Activated T-helper 2 cell treated with anti-CD3 and anti-CD28 coated beads, Interferon-gamma antibody, Interleukin-2, Interleukin-4, amounts not matched to agents 10 μg/mL and 5 μg/mL and 100 μg/mL, durations not matched to agents 14 hours and 24 hours and 36 hours (primary cell): ENCODE measurements at regions of chr5 and their contacts with region 1.

Region 1: GRCh38 chr5:10353241-10354047 is at the start of gene MARCHF6:
- DNase-seq: peak; percentile 88
- H3K4me3 Mint-ChIP-seq: peak within 1 kb of the TSS; percentile 99
- H3K27ac Mint-ChIP-seq: peak within 1 kb of the TSS; percentile 98
- H3K4me1 Mint-ChIP-seq: peaks cover 35% of the 10 kb centered on the region
- H3K27me3 Mint-ChIP-seq: no peaks in the 10 kb centered on the region
- total RNA-seq, gene MARCHF6: 111 and 116 TPM in 2 replicates

Region 2: DNA sequence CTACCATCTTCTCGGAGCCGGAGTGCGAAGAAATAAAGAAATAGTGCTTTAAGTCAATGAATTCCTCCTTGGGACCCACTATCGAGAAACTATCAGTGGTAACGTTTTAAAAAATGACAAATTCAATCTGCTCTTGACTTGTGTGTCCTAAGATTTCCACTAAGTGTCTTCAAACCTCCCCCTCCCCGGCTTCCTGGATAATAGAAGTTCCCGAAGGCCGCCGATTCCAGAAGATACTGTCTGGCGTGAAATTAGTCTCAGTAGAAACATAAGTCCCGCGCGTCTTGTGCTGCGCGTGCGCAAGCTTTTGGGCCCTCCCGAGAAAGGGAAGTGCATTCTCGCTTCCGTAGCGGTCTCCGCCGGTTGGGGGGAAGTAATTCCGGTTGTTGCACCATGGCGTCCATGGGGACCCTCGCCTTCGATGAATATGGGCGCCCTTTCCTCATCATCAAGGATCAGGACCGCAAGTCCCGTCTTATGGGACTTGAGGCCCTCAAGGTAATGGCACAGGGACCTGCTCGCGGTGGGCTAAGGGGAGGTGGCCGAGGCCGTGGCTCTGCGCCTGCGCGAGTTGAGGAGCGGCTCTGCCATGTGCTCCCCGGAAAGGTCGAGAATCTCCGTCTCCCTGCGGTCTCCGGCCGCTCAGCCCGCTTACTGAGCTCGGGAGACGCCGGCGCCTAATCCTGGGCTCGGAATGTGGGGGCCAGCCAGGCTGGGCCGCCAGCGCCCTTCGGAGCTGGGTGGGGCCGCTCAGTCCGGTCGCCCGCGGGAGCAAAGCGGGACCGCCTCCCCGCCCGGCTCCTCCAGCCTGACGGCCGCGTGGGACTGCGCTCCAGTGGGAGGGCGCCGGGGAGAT is 103.3 kb before region 1 on chr5 and contains the start of gene CCT5:
- intact Hi-C with region 1: loop called (anchors 1 kb)
- DNase-seq: peak; percentile 90
- H3K4me3 Mint-ChIP-seq: peak within 1 kb of the TSS; percentile 96
- H3K27ac Mint-ChIP-seq: peak within 1 kb of the TSS; percentile 98
- H3K4me1 Mint-ChIP-seq: peaks cover 41% of the 10 kb centered on the region
- H3K27me3 Mint-ChIP-seq: no peaks in the 10 kb centered on the region
- total RNA-seq, gene CCT5: 494 and 522 TPM in 2 replicates

Region 3: DNA sequence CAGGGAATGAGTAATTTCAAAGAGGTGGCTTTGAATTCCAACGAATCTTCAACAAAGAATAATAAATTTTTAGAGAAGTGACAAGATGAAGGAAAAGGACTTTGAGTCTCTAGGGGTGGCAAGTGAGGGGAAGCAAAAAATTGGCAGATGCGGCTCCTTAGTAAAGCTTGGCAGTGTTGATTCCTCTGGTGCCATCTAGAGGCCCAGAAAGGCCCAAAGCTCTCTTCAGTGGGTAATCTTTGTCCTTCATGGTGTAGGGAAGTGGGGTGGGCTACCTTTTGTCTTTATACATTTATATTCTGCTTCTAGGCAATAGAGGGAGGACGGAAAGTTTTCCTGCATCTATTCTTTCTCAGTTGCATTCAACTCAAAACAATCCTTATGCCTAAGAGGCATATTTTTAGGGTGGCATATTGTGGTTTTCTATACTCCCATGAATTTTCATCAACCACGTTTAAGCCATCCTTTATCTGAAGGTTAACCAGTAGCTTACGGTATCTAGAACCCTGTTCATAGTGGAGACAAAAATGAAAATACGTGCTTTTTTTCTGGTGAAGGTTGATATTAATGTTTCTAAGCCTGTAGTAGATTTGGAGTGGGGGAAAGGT is 70.8 kb after region 1 on chr5:
- intact Hi-C with region 1: loop called (anchors 5 kb)
- DNase-seq: no peak
- H3K4me3 Mint-ChIP-seq: no peak overlapping the region
- H3K27ac Mint-ChIP-seq: no peak overlapping the region
- H3K4me1 Mint-ChIP-seq: peaks cover 19% of the 10 kb centered on the region
- H3K27me3 Mint-ChIP-seq: no peaks in the 10 kb centered on the region

Region 4: GRCh38 chr5:10563945-10564837 is 210.7 kb after region 1 on chr5 and contains the start of gene ANKRD33B:
- intact Hi-C with region 1: loop called (anchors 5 kb)
- DNase-seq: peak; percentile 76
- H3K4me3 Mint-ChIP-seq: peak within 1 kb of the TSS; percentile 92
- H3K27ac Mint-ChIP-seq: peak within 1 kb of the TSS; percentile 82
- H3K4me1 Mint-ChIP-seq: peaks cover 43% of the 10 kb centered on the region
- H3K27me3 Mint-ChIP-seq: peaks cover 16% of the 10 kb centered on the region
- total RNA-seq, gene ANKRD33B: 31.1 and 31.5 TPM in 2 replicates

Region 5: GRCh38 chr5:10761166-10761932 is 407.9 kb after region 1 on chr5 and contains the start of gene DAP:
- intact Hi-C with region 1: loop called (anchors 2 kb)
- DNase-seq: peak; percentile 87
- H3K4me3 Mint-ChIP-seq: peak within 1 kb of the TSS; percentile 97
- H3K27ac Mint-ChIP-seq: peak within 1 kb of the TSS; percentile 84
- H3K4me1 Mint-ChIP-seq: peaks cover 24% of the 10 kb centered on the region
- H3K27me3 Mint-ChIP-seq: peaks cover 15% of the 10 kb centered on the region
- total RNA-seq, gene DAP: 51.3 and 56.6 TPM in 2 replicates